Activated T-helper 1 cell treated with anti-CD3 and anti-CD28 coated beads, Interleukin-12 subunit alpha, Interleukin-12 subunit beta, Interleukin-2, Interleukin-4 antibody, amounts not matched to agents 30 ng/mL and 10 ng/mL and 1 ng/mL, durations not matched to agents 14 hours and 24 hours and 36 hours (primary cell): ENCODE measurements at regions of chr12 and their contacts with region 1.

Region 1: DNA sequence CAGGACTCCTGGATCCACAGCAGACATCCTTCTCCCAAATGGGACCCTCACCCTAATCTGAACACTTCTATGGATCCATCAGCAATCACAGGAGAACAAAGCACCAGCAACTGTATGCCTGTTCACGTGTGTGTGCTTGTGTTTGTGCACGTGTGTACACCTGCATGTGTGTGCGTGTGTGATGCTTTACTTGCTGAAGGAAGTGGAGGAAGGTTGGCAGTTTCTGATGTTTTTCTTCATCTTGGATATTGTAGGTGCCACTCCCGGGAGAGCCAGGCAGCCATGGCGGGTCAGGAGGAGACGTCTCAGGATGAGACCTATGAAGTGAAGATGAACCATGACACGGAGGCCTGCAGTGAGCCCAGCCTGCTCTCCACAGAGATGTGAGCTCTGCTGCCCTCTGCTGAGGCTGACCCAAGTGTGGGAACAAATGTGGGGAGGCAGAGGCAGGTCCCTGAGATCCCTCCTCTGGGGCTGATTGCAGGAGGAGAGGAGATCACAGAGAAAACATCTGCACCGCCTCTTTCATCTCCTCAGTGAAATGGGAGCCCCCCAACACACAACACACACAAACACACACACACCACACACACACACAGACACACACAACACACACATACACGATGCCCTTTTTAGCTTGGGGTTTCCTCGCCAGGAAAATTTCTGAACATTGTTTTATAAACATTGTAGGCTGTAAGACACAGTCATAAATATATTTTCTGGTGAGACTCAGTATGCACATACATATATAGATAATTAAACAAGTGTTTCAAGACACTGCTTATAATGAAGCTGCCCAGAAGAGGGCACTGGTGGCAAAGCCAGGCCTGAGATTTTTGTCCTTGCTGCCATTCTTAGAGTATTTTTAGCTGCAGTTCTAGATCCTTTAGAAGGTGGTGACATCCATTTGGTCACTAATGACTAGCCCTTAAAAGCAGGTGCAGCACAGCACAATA is 112.2 kb upstream of the FKBP4 start:
- DNase-seq: peak; percentile 31
- H3K4me3 Mint-ChIP-seq: no peak overlapping the region
- H3K27ac Mint-ChIP-seq: peak overlapping the region; percentile 77
- H3K4me1 Mint-ChIP-seq: peaks cover 7% of the 10 kb centered on the region
- H3K27me3 Mint-ChIP-seq: no peaks in the 10 kb centered on the region

Region 2: GRCh38 chr12:2208837-2209635 is 473.5 kb before region 1 on chr12:
- intact Hi-C with region 1: no loop called
- DNase-seq: no peak
- H3K4me3 Mint-ChIP-seq: no peak overlapping the region
- H3K27ac Mint-ChIP-seq: no peak overlapping the region
- H3K4me1 Mint-ChIP-seq: no peaks in the 10 kb centered on the region
- H3K27me3 Mint-ChIP-seq: peaks cover 8% of the 10 kb centered on the region

Region 3: GRCh38 chr12:2783936-2784600 is 101.5 kb after region 1 on chr12:
- intact Hi-C with region 1: loop called (anchors 1 kb)
- DNase-seq: peak; percentile 31
- H3K4me3 Mint-ChIP-seq: peak overlapping the region; percentile 61
- H3K27ac Mint-ChIP-seq: no peak overlapping the region
- H3K4me1 Mint-ChIP-seq: peaks cover 13% of the 10 kb centered on the region
- H3K27me3 Mint-ChIP-seq: peaks cover 35% of the 10 kb centered on the region